Activated CD8-positive, alpha-beta T cell treated with anti-CD3 and anti-CD28 coated beads, Interleukin-2, amount 10 ng/mL, durations not matched to agents 7 days and 5 days (primary cell): ENCODE measurements at regions of chr9 and their contacts with region 1.

Region 1: GRCh38 chr9:133184962-133185361 is 21.2 kb upstream of the GBGT1 start:
- DNase-seq: peak; percentile 69
- ATAC-seq: peak; percentile 56
- H3K4me3 Mint-ChIP-seq: peak overlapping the region; percentile 38
- H3K27ac Mint-ChIP-seq: no peak overlapping the region
- H3K4me1 Mint-ChIP-seq: peaks cover 17% of the 10 kb centered on the region
- H3K27me3 Mint-ChIP-seq: peaks cover 41% of the 10 kb centered on the region

Region 2: GRCh38 chr9:133173056-133173455 is 11.9 kb before region 1 on chr9:
- CTCF ChIA-PET with region 1: interaction called, 54 read pairs
- POLR2A ChIA-PET with region 1: no interaction called
- DNase-seq: no peak
- ATAC-seq: no peak
- H3K4me3 Mint-ChIP-seq: no peak overlapping the region
- H3K27ac Mint-ChIP-seq: no peak overlapping the region
- H3K4me1 Mint-ChIP-seq: no peaks in the 10 kb centered on the region
- H3K27me3 Mint-ChIP-seq: peaks cover 21% of the 10 kb centered on the region

Region 3: DNA sequence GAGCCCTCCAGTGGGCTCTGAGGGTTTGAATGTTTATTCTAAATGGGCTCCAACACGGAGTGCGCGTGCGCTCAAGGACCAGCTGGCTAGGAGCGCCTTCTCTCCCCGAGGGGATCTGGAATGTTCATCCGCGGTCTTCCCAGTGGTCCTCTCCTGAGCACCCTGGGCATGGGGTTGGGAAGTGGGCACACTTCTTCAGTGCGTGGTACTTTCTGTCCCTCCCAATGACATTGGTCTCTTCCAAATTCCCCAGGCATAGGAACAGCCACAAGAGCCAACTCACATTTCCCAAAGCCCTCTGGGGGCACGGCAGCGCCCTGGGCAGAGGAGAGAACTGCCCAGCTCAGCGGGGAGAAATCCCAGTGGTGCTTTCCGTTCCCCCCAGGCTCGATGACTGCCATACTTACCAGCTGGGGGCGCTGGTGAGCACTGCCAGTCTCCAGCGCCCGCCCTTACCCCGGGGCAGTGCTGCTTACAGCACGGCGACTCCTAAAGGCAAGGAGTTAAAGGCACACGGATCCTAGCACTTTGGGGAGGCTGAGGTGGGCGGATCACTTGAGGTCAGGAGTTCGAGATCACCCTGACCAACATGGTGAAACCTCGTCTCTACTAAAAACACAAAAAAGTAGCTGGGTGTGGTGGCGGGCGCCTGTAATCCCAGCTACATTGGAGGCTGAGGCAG is 54.0 kb after region 1 on chr9:
- CTCF ChIA-PET with region 1: interaction called, 13 read pairs
- POLR2A ChIA-PET with region 1: interaction called, 3 read pairs
- DNase-seq: peak; percentile 75
- ATAC-seq: peak; percentile 86
- H3K4me3 Mint-ChIP-seq: peak overlapping the region; percentile 36
- H3K27ac Mint-ChIP-seq: no peak overlapping the region
- H3K4me1 Mint-ChIP-seq: peaks cover 7% of the 10 kb centered on the region
- H3K27me3 Mint-ChIP-seq: peaks cover 14% of the 10 kb centered on the region

Region 4: DNA sequence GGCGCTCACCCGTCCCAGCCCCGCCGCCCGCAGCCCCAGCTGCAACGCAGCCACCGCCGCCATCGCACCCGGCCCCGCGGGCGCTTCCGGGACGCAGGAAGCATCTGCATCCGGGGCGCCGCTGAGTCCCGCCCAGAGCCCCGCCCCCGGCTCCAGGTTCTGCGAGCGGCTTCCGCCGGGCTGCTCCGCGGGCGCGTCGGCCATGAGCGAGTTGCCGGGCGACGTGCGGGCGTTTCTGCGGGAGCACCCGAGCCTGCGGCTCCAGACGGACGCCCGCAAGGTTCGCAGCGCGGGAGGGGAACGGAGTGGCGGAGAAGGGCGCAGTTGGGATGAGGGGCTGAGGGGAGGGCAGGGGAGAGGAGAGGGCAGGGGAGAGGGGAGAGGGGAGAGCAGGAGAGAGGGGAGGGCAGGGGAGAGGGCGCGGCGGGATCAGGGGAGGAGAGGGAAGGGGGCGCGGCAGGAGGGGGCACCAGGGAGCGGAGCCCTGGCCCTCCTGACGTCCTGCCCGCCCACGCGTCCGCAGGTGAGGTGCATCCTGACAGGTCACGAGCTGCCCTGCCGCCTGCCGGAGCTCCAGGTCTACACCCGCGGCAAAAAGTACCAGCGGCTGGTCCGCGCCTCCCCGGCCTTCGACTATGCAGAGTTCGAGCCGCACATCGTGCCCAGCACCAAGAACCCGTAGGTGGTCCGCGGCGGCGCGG is 171.6 kb after region 1 on chr9 and contains the starts of genes SURF1 and SURF2:
- CTCF ChIA-PET with region 1: interaction called, 10 read pairs
- POLR2A ChIA-PET with region 1: no interaction called
- DNase-seq: peak; percentile 94
- ATAC-seq: peak; percentile 89
- H3K4me3 Mint-ChIP-seq: peak within 1 kb of the TSS; percentile 86
- H3K27ac Mint-ChIP-seq: peak within 1 kb of the TSS; percentile 90
- H3K4me1 Mint-ChIP-seq: peaks cover 56% of the 10 kb centered on the region
- H3K27me3 Mint-ChIP-seq: no peaks in the 10 kb centered on the region
- total RNA-seq, gene SURF1: 37.4 to 39.1 TPM
- total RNA-seq, gene SURF2: 18.4 to 20.7 TPM

Region 5: DNA sequence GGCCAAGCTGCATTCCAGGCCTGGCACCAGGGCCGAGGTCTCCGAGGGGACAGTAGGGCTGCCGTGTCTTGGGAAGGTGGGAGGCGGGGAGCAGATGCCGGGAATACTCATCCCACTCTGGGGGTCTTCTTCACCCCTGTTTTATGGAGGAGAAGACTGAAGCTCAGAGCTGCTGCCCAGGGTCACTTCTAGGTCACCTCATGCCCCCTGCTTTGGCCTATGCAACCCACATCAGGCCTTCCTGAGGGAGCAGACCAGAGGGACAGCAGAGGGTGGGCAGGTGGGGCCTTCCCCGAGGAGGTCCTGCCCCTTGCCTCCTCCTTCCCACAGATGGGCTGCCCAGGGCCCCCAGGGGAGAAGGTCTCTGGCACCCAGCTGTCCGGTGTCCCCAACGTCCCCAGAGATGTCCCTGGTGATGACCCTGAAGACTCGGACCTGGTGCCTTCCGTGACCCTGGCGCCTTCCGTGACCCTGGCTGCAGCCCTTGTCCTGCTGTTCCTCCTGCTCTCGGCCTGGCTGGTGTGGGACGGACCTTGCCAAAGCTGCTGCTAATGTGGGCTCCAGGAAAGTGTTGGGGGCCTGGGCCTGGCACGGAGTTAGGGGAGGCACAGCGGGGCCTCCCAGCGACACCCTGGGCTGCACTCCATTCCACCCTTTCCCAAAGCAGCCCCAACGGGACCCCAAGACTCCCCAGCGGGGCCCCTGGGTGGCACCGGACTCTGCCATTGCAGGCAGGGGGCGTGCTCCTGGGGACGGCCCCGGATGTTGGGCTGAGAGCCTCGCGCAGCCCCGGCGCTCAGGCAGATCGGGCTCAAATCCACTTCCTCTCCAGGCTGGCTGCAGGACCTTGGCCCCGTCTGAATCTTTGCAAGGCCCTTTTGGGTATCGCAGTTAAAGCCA is 300.6 kb after region 1 on chr9:
- CTCF ChIA-PET with region 1: interaction called, 20 read pairs
- POLR2A ChIA-PET with region 1: no interaction called
- DNase-seq: peak; percentile 54
- ATAC-seq: peak; percentile 74
- H3K4me3 Mint-ChIP-seq: peak overlapping the region; percentile 53
- H3K27ac Mint-ChIP-seq: peak overlapping the region; percentile 83
- H3K4me1 Mint-ChIP-seq: peaks cover 13% of the 10 kb centered on the region
- H3K27me3 Mint-ChIP-seq: peaks cover 15% of the 10 kb centered on the region